ENCODE measurements at regions of chr5 and their contacts with region 1.

Region 1: DNA sequence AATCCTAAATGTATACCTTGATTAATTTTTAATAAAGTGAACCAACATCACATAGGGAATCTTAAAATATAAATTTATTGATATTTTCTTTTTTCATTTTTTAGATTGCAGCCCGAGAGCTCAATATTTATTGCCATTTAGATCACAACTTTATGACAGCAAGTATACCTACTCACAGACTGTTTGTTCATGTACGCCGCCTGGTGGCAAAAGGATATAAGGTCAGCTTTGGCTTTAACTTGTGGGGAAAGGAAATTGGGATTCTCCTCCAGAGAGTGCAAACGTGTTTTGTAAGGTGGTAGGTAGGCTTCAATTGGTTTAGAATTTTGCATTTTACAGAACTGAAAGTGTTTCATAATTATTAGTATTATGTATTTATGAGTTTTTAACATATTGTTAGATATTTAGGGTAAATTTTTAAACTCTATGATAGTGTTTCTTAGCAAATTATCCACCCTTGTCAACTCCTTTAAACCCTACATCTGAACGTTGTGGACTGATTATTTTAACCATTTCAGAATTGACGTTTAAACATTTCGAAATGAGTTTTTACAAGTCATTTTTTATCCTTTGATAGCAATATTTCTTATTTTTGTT is 17.5 kb upstream of the DHFR start:
- DNase-seq: peak; percentile 81
- ATAC-seq: peak; percentile 85
- H3K4me3 Mint-ChIP-seq: no peak overlapping the region
- H3K27ac Mint-ChIP-seq: no peak overlapping the region
- H3K4me1 Mint-ChIP-seq: peaks cover 8% of the 10 kb centered on the region
- H3K27me3 Mint-ChIP-seq: no peaks in the 10 kb centered on the region
- CTCF ChIP-seq: peak; percentile 77

Region 2: GRCh38 chr5:80487829-80488721 is 184.2 kb before region 1 on chr5 and contains the start of gene FAM151B:
- CTCF ChIA-PET with region 1: interaction called, 5 read pairs
- POLR2A ChIA-PET with region 1: no interaction called
- intact Hi-C with region 1: loop called (anchors 10 kb)
- DNase-seq: peak; percentile 77
- ATAC-seq: peak; percentile 96
- H3K4me3 Mint-ChIP-seq: peak within 1 kb of the TSS; percentile 71
- H3K27ac Mint-ChIP-seq: no peak within 1 kb of the TSS
- H3K4me1 Mint-ChIP-seq: peaks cover 10% of the 10 kb centered on the region
- H3K27me3 Mint-ChIP-seq: peaks cover 22% of the 10 kb centered on the region
- CTCF ChIP-seq: no peak
- total RNA-seq, gene FAM151B: 0.25 TPM in 1 of 2 experiments, not detected in the other

Region 3: DNA sequence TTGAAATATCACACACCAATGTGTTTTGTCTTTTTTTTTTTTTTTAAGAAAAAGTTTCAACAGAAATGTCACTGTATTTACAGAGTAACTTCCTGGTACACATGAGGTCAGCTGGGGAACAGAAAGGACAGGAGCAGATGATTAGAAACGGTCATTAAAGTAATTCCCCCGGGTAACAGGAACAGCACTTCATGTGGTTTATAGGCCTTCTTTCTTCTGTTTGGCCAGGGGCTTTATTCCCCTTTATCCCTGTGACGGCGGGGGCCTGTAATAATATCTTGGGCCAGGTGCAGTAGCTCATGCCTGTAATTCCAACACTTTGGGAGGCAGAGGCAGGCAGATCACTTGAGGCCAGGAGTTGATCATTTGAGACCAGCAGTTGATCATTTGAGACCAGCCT is 48.2 kb before region 1 on chr5:
- CTCF ChIA-PET with region 1: no interaction called
- POLR2A ChIA-PET with region 1: no interaction called
- intact Hi-C with region 1: no loop called
- DNase-seq: no peak
- ATAC-seq: no peak
- H3K4me3 Mint-ChIP-seq: no peak overlapping the region
- H3K27ac Mint-ChIP-seq: no peak overlapping the region
- H3K4me1 Mint-ChIP-seq: no peaks in the 10 kb centered on the region
- H3K27me3 Mint-ChIP-seq: no peaks in the 10 kb centered on the region
- CTCF ChIP-seq: no peak

Region 4: DNA sequence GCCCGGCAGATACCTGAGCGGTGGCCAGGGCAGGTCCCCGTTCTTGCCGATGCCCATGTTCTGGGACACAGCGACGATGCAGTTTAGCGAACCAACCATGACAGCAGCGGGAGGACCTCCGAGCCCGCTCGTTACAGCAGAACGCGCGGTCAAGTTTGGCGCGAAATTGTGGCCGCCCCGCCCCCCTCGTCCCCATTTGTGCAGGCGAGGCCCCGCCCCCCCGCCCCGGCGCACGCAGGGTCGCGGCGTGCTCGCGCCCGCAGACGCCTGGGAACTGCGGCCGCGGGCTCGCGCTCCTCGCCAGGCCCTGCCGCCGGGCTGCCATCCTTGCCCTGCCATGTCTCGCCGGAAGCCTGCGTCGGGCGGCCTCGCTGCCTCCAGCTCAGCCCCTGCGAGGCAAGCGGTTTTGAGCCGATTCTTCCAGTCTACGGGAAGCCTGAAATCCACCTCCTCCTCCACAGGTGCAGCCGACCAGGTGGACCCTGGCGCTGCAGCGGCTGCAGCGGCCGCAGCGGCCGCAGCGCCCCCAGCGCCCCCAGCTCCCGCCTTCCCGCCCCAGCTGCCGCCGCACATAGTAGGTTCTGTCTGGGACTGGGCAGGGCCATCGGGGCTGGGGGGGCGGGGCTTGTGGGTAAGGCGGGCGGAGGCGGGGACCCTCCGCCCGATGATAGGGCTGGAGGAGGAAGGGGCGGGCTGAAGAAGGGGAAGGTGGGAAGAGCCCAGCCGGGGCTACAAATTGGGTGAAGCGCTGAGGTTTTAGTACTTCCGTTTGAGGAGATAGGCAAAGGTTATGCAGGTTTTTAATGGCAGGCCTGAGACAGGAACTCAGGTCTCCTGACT is 17.6 kb before region 1 on chr5 and contains the starts of genes DHFR and MSH3:
- CTCF ChIA-PET with region 1: interaction called, 8 read pairs
- POLR2A ChIA-PET with region 1: interaction called, 21 read pairs
- intact Hi-C with region 1: no loop called
- DNase-seq: peak; percentile 95
- ATAC-seq: peak; percentile 77
- H3K4me3 Mint-ChIP-seq: peak within 1 kb of the TSS; percentile 96
- H3K27ac Mint-ChIP-seq: peak within 1 kb of the TSS; percentile 100
- H3K4me1 Mint-ChIP-seq: peaks cover 24% of the 10 kb centered on the region
- H3K27me3 Mint-ChIP-seq: no peaks in the 10 kb centered on the region
- CTCF ChIP-seq: no peak
- total RNA-seq, gene DHFR: 107 to 109 TPM
- total RNA-seq, gene MSH3: 23.0 to 23.4 TPM

Measured in activated CD8-positive, alpha-beta T cell treated with anti-CD3 and anti-CD28 coated beads for 36 hours (primary cell).